AG04450 (cell line): ENCODE measurements at regions of chr4 and their contacts with region 1.

Region 1: DNA sequence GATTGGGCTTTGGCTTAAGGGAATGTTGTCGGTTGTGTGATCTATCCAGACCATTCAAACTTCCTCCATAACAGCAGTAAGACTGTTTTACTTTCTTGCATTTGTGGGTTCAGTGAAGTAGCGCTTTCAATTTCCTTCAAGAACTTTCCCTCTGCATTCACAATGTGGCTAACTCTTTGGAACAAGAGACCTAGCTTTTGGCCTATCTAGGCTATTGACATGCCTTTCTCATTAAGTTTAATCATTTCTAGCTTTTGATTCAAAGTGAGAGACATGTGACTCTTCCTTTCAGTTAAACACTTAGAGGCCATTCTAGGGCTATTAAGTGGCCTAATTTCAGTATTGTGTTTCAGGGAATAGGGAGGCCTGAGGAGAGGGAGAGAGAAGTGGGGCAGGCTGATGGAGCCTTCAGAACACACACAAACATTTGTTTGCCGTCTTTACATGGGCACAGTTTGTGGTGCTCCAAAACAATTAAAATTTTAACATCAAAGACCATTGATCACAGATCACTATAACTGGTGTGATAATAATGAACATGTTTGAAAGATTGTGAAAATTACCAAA is 34.1 kb downstream of the ADH5 start:
- DNase-seq: no peak
- H3K4me3 ChIP-seq: no peak overlapping the region
- H3K27ac ChIP-seq: no peak overlapping the region
- H3K27me3 ChIP-seq: no peaks in the 10 kb centered on the region
- CTCF ChIP-seq: no peak

Region 2: GRCh38 chr4:98150092-98150761 is 904.3 kb before region 1 on chr4:
- CTCF ChIA-PET with region 1: interaction called, 10 read pairs
- POLR2A ChIA-PET with region 1: no interaction called
- DNase-seq: no peak
- H3K4me3 ChIP-seq: no peak overlapping the region
- H3K27ac ChIP-seq: no peak overlapping the region
- H3K27me3 ChIP-seq: no peaks in the 10 kb centered on the region
- CTCF ChIP-seq: peak; percentile 28

Region 3: DNA sequence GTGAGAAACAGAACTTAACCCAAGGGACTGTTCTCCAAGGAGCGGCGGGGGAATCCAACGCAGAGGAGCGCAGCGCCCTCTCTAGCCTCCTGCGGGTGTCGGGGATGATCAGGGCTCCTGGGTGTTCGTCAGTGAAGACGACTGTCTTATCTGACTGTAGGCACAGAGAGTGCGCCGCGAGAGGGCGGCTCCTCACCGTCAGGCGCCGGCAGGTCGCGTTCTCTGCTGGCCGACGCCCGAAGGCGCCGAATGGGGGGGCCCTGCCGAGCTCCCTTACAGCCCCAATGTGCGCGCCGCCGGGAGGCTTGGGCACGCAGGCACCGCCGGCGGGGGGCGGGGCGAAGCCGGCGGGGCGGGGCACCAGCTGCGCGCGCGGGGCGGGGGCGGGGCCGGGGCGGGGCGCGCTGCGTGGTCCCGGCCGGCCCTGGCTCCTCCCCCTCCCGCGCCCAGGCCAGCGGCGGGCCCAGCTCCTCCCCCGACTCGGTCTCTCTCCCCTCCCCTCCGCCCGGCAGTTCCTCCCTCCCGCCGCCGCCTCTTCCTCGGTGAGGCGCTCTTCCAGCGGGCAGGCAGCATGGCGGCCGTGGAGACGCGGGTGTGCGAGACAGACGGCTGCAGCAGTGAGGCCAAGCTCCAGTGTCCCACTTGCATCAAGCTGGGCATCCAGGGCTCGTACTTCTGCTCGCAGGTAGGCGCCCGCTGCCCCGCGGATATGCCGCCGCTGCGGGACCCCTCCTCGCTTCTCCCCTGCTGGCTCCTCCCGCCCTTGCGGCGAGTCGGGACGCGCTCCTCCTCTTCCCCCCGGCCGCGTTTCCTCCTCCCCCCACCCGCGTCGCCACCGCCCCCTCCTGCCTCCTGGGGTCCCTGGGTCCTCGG is 59.1 kb before region 1 on chr4 and contains the start of gene METAP1:
- CTCF ChIA-PET with region 1: interaction called, 37 read pairs
- POLR2A ChIA-PET with region 1: interaction called, 11 read pairs
- DNase-seq: peak; percentile 80
- H3K4me3 ChIP-seq: peak within 1 kb of the TSS; percentile 93
- H3K27ac ChIP-seq: peak within 1 kb of the TSS; percentile 77
- H3K27me3 ChIP-seq: no peaks in the 10 kb centered on the region
- CTCF ChIP-seq: peak; percentile 59
- polyA plus RNA-seq, gene METAP1: 58.4 and 74.0 TPM in 2 replicates

Region 4: GRCh38 chr4:99028187-99028586 is 26.3 kb before region 1 on chr4:
- CTCF ChIA-PET with region 1: interaction called, 15 read pairs
- POLR2A ChIA-PET with region 1: no interaction called
- DNase-seq: no peak
- H3K4me3 ChIP-seq: no peak overlapping the region
- H3K27ac ChIP-seq: no peak overlapping the region
- H3K27me3 ChIP-seq: no peaks in the 10 kb centered on the region
- CTCF ChIP-seq: no peak

Region 5: GRCh38 chr4:99159699-99160098 is 105.2 kb after region 1 on chr4:
- CTCF ChIA-PET with region 1: no interaction called
- POLR2A ChIA-PET with region 1: no interaction called
- DNase-seq: no peak
- H3K4me3 ChIP-seq: no peak overlapping the region
- H3K27ac ChIP-seq: no peak overlapping the region
- H3K27me3 ChIP-seq: no peaks in the 10 kb centered on the region
- CTCF ChIP-seq: 0 out of 2 replicates have a peak, but pooled peaks have one; percentile 8